MCF 10A (cell line): ENCODE measurements at regions of chr10 and their contacts with region 1.

Region 1: DNA sequence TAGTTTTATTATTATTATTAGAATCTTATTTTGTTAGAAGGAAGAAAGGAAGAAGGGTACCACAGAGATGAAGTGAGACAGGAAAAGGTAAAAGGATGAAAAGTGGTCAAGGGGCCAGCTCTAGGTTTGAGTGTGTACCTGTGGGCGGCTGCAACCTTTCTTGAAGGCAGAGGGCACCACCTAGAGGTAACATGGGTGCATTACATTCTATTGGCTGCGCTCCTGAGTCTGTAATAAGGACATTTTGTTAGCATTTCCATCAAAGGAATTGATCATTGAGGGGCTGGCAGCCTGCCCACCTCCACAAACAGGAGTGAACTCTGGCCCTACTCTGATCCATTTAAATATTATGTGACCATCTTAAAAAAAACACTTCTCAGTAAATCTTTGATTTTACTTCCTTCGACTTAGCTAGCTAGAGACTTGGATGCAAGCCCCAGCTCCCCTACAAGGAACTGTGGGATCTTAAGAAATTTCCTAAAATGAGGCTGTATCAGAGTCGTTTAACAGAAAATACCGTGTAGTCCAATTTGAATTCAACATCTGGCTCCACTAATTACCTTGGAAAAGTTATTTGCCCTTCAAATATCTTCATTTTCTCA is 610.4 kb downstream of the IPMK start:
- DNase-seq: peak; percentile 73
- H3K4me3 Mint-ChIP-seq: no peak overlapping the region
- H3K27ac Mint-ChIP-seq: no peak overlapping the region
- H3K4me1 Mint-ChIP-seq: no peaks in the 10 kb centered on the region
- H3K27me3 Mint-ChIP-seq: no peaks in the 10 kb centered on the region
- CTCF ChIP-seq: peak; percentile 88

Region 2: GRCh38 chr10:57338823-57339558 is 318.3 kb before region 1 on chr10:
- CTCF ChIA-PET with region 1: interaction called, 50 read pairs
- POLR2A ChIA-PET with region 1: no interaction called
- intact Hi-C with region 1: loop called (anchors 1 kb)
- DNase-seq: peak; percentile 56
- H3K4me3 Mint-ChIP-seq: no peak overlapping the region
- H3K27ac Mint-ChIP-seq: no peak overlapping the region
- H3K4me1 Mint-ChIP-seq: no peaks in the 10 kb centered on the region
- H3K27me3 Mint-ChIP-seq: peaks cover 6% of the 10 kb centered on the region
- CTCF ChIP-seq: peak; percentile 55

Region 3: DNA sequence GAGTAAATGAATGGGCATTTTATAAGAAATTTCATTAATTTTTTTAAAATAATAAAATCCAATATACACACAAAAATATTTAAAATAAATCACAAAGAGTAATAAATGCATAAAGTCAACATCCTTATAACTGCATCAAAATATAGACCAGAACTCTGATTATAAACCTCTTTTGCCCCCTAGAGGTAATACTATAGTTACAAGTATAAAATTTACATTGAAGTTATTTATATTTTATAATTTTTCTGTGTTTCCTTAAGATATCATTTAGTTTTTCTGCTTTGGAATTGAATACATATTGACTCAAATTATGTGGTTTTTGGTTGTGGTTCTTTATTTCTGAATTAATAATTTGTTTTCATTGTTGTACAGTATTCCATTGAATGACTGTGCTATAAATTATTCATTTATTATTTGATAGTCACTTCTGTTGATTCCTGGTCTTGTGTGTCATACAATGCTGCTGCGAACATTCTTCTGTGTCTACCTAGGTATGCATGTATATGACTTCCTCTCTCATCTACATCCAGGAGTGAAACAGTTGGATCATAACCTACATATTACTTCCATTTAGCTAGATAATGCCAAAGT is 63.2 kb before region 1 on chr10:
- CTCF ChIA-PET with region 1: interaction called, 14 read pairs
- POLR2A ChIA-PET with region 1: no interaction called
- intact Hi-C with region 1: no loop called
- DNase-seq: no peak
- H3K4me3 Mint-ChIP-seq: no peak overlapping the region
- H3K27ac Mint-ChIP-seq: peak overlapping the region; percentile 51
- H3K4me1 Mint-ChIP-seq: no peaks in the 10 kb centered on the region
- H3K27me3 Mint-ChIP-seq: peaks cover 34% of the 10 kb centered on the region
- CTCF ChIP-seq: peak; percentile 30

Region 4: GRCh38 chr10:57638411-57638810 is 18.9 kb before region 1 on chr10:
- CTCF ChIA-PET with region 1: interaction called, 35 read pairs
- POLR2A ChIA-PET with region 1: no interaction called
- intact Hi-C with region 1: no loop called
- DNase-seq: peak; percentile 12
- H3K4me3 Mint-ChIP-seq: no peak overlapping the region
- H3K27ac Mint-ChIP-seq: no peak overlapping the region
- H3K4me1 Mint-ChIP-seq: no peaks in the 10 kb centered on the region
- H3K27me3 Mint-ChIP-seq: no peaks in the 10 kb centered on the region
- CTCF ChIP-seq: no peak

Region 5: GRCh38 chr10:57675125-57675524 is 17.9 kb after region 1 on chr10:
- CTCF ChIA-PET with region 1: interaction called, 12 read pairs
- POLR2A ChIA-PET with region 1: no interaction called
- intact Hi-C with region 1: no loop called
- DNase-seq: no peak
- H3K4me3 Mint-ChIP-seq: no peak overlapping the region
- H3K27ac Mint-ChIP-seq: no peak overlapping the region
- H3K4me1 Mint-ChIP-seq: no peaks in the 10 kb centered on the region
- H3K27me3 Mint-ChIP-seq: no peaks in the 10 kb centered on the region
- CTCF ChIP-seq: no peak

Region 6: GRCh38 chr10:57849691-57850357 is 192.6 kb after region 1 on chr10:
- CTCF ChIA-PET with region 1: interaction called, 28 read pairs
- POLR2A ChIA-PET with region 1: no interaction called
- intact Hi-C with region 1: loop called (anchors 1 kb)
- DNase-seq: peak; percentile 38
- H3K4me3 Mint-ChIP-seq: no peak overlapping the region
- H3K27ac Mint-ChIP-seq: no peak overlapping the region
- H3K4me1 Mint-ChIP-seq: peaks cover 5% of the 10 kb centered on the region
- H3K27me3 Mint-ChIP-seq: no peaks in the 10 kb centered on the region
- CTCF ChIP-seq: peak; percentile 58

Region 7: DNA sequence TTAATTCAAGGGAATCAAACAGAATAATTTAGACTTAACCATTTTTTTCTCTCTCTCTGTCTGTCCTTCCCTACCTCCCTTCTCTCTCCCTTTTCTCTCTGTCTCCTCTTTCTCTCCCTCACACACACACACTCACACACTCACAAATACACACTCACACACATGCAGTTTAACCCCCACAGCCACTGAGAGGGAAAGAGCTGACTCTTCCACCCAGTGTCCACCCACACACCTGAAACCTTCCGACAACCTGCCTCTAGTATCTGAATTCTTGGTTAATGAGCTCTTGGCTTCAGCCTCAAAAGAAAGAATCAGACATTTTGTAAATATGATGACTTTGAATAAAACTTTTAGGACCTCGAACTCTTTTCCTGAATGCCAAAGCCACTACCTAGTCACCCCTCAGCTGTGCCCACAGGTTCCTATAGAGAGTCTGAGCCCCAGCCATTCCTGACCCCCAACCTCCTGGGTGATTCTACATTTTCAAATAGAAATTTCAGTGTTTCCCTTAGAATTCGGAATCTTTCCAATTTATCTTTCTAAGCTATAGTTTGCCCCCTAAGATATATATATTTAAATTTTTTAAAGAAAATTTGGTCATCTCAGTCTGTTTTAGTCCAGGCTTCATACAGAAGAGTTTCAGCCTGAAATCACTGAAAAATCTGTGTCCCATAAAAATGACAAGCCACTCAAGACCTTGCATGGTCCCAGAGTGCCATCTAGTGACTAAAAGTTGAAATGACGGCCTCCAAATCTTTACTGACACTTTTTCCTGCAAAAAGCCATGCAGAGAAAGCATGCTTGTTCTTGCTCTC is 407.7 kb after region 1 on chr10:
- CTCF ChIA-PET with region 1: interaction called, 32 read pairs
- POLR2A ChIA-PET with region 1: no interaction called
- intact Hi-C with region 1: loop called (anchors 1 kb)
- DNase-seq: peak; percentile 62
- H3K4me3 Mint-ChIP-seq: no peak overlapping the region
- H3K27ac Mint-ChIP-seq: peak overlapping the region; percentile 30
- H3K4me1 Mint-ChIP-seq: peaks cover 6% of the 10 kb centered on the region
- H3K27me3 Mint-ChIP-seq: no peaks in the 10 kb centered on the region
- CTCF ChIP-seq: peak; percentile 90